Left cardiac atrium (tissue), 4 donors: ENCODE measurements at regions of chr6 and their contacts with region 1.

Region 1: GRCh38 chr6:5471044-5471443 is 209.7 kb downstream of the FARS2 start:
- DNase-seq: peak; percentile 68
- ATAC-seq: peak; percentile 80 to 87

Region 2: DNA sequence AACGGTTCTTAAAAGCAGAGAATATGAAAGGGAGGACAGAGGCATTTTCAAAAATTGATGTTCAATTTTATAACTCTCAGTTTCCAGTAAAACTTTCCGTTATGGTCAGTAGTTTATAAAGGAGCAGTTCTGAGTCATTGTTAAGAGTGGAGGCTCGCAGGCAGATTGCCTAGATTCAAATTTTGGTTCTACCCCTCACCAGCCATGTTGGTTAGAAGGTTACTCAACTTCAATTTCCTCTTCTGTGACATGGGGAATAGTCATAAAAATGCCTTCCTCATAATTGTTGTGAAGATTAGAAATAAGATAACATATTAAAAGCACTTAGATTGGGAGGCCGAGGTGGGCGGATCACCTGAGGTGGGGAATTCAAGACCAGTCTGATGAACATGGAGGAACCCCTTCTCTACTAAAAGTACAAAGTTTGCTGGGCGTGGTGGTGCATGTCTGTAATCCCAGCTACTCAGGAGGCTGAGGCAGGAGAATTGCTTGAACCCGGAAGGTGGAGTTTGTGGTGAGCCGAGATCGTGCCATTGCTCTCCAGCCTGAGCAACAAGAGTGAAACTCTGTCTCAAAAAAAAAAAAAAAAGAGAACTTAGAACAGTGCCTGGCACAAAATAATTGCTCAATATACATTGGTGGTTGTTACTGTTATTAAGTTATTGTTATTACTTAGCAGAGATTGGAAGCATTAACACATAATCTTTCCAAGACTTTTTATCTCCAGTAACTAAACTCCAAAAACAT is 186.8 kb after region 1 on chr6:
- intact Hi-C with region 1: loop called in 1 of 2 experiments (anchors 10 kb)
- DNase-seq: no peak
- ATAC-seq: peak in 1 of 2 donors; percentile 19

Region 3: GRCh38 chr6:5764401-5764955 is 293.4 kb after region 1 on chr6:
- intact Hi-C with region 1: loop called in 1 of 2 experiments (anchors 2 kb)
- DNase-seq: peak; percentile 67
- ATAC-seq: peak; percentile 87 to 89

Region 4: DNA sequence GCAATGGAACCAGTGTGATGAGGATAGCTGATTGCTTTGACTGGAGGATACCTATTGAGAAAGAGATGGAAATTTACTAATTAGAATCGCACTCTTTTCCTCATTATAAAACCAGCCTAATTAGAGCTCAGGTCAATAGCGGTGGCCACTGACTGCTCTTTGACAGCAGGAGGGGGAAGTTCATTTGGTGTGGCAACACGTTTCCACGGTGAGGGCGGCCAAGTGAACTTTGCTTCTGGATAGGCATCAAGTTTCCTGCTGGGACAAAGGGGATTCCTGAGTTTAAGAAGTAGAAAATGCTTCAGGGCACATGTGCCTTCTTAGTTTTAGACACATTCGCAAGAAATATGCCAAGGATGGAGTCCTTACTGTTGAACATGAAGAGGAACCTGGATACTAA is 681.0 kb after region 1 on chr6:
- intact Hi-C with region 1: no loop called
- DNase-seq: no peak
- ATAC-seq: no peak